ENCODE measurements at regions of chr5 and their contacts with region 1.

Region 1: DNA sequence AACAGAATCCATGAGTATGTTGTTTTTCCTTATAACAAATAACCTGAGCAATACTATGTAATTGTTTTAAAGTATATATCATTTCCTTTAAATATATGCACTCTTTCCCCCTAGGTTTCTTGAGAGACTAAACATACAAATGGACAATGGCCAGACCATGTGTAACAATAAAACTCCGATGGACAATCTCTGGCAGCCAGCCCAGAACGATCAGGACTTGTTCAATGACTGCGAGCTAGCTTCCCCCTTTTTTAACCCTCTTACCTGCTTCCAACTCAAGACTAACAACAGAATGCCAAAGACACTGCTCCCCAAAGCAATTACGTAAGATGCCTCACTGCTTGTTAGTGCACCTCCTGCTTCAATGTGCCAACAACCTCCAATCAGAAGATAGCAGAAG is 94.9 kb downstream of the HTR4 start:
- DNase-seq: no peak
- H3K4me3 ChIP-seq: no peak overlapping the region
- H3K27ac ChIP-seq: no peak overlapping the region
- H3K4me1 ChIP-seq: peaks cover 0 to 44% (median 27%) of the 10 kb centered on the region in 4 donors
- H3K27me3 ChIP-seq: no peaks in the 10 kb centered on the region
- CTCF ChIP-seq: no peak
- EP300 ChIP-seq: no peak
- POLR2A ChIP-seq: no peak

Region 2: GRCh38 chr5:148469501-148469935 is 89.9 kb before region 1 on chr5:
- intact Hi-C with region 1: loop called (anchors 5 kb)
- DNase-seq: peak; percentile 66
- H3K4me3 ChIP-seq: no peak overlapping the region
- H3K27ac ChIP-seq: peak overlapping the region; percentile 11 to 65 (median 29)
- H3K4me1 ChIP-seq: peaks cover 0 to 31% (median 20%) of the 10 kb centered on the region in 4 donors
- H3K27me3 ChIP-seq: no peaks in the 10 kb centered on the region
- CTCF ChIP-seq: no peak
- EP300 ChIP-seq: no peak
- POLR2A ChIP-seq: no peak

Region 3: GRCh38 chr5:148491015-148491792 is 68.3 kb before region 1 on chr5:
- intact Hi-C with region 1: loop called (anchors 5 kb)
- DNase-seq: no peak
- H3K4me3 ChIP-seq: no peak overlapping the region
- H3K27ac ChIP-seq: no peak overlapping the region
- H3K4me1 ChIP-seq: peaks cover 0 to 38% (median 22%) of the 10 kb centered on the region in 4 donors
- H3K27me3 ChIP-seq: no peaks in the 10 kb centered on the region
- CTCF ChIP-seq: no peak
- EP300 ChIP-seq: no peak
- POLR2A ChIP-seq: no peak

Region 4: DNA sequence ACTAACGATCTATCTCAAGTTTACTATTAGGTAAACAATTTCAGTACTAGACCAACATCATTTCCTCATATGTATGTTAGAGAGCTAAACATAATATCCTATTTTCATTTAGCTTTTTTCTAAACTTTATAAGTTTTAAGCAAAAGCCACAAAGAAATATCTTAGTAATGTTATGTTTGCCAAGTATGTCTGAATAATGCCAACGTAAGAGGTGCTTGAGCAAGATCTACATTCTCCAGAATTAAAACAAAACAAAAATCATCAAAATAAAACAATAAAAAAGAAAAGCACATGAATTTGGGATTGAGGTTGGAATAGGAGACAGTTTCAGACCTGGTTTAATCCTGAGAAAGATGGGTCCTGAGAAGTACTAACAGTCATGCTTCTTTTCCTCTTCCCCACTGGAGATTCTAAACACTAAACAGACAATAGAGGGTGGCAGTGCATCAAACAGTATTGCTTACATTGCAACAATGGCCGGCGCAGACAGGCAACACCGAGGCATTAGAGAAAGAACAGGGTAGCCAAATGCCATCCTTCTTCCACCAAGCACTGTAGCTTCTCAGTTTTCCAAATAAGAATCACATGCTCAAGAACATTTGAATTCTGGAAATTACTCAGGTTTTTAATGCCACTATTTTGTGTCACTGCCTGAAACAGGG is 958.1 kb after region 1 on chr5:
- intact Hi-C with region 1: no loop called
- DNase-seq: no peak
- H3K4me3 ChIP-seq: no peak overlapping the region
- H3K27ac ChIP-seq: peak overlapping the region; percentile 39 to 69 (median 63)
- H3K4me1 ChIP-seq: peaks cover 0 to 96% (median 85%) of the 10 kb centered on the region in 4 donors
- H3K27me3 ChIP-seq: no peaks in the 10 kb centered on the region
- CTCF ChIP-seq: no peak
- EP300 ChIP-seq: no peak
- POLR2A ChIP-seq: no peak